Aorta (tissue), 5 donors: ENCODE measurements at regions of chr7 and their contacts with region 1.

Region 1: DNA sequence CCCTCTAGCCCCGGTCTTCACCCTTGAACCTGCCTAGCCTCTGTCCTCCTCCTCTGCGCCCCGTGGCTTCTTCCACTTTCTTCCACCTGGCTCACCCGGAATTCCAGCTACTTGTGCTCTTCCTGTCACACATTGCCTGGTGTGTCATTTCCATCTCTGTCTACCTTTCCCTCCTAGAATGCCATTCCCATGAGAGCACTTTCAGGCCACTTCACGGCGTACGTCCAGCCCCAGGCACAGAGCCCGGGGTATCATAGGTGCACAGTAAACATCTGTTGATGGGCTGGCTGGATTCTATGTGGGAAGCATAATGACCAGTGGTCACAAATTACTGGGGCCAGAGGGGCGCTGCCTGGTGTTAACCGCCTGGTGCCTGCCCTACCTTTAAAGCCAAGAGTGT is 161.3 kb downstream of the CUX1 start:
- DNase-seq: no peak
- ATAC-seq: no peak
- H3K4me3 ChIP-seq: no peak overlapping the region
- H3K27ac ChIP-seq: no peak overlapping the region
- H3K4me1 ChIP-seq: no peaks in the 10 kb centered on the region
- H3K27me3 ChIP-seq: no peaks in the 10 kb centered on the region

Region 2: DNA sequence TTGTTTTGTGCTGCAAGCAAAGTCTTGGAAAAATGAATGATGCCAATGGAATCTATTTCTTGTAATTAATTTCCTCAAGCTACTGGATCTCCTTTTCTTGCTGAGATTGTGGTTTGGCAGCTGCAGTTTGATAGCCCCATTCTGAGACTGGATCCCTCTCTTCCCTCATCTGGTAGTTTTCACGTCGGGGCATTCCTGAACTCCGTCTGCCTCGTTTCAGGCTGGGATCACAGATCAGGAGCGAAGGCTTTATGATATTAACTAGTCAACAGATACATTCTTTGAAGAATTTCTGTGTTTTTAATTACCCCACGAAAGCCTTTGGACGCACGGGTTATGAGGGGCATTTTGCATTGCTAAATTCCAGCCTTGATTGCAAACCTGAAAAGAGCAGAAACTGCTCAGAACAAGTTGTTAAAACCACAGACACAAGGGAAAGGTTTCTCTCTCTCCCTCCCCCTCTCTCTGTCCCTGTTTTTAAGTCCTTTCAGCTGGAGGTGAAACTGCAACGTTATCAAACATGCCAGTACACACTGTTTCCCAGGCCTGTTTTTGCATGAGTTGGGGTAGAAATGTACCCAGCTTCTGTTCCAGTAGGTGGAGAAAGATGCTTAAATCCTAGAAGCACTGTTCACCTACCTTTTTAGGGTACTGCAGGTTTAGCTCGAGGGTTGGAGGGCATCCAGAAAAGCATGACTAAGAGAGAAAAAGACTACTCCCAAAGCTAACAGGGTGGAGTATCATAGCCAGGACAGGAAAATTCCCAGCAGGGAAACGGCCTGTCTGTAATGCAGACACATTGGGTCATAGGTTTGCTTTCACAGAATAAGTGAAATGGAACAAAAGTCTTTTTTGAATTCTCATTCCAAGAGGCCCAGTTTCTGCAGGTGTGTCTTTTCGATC is 37.0 kb before region 1 on chr7:
- intact Hi-C with region 1: no loop called
- DNase-seq: peak in 1 of 2 donors; percentile 37
- ATAC-seq: peak; percentile 70
- H3K4me3 ChIP-seq: no peak overlapping the region
- H3K27ac ChIP-seq: peak overlapping the region in 1 of 2 donors; percentile 70
- H3K4me1 ChIP-seq: peaks cover 2 to 3% of the 10 kb centered on the region in 2 donors
- H3K27me3 ChIP-seq: no peaks in the 10 kb centered on the region

Region 3: GRCh38 chr7:101960985-101961708 is 17.5 kb before region 1 on chr7:
- intact Hi-C with region 1: loop called in 1 of 2 experiments (anchors 1 kb)
- DNase-seq: no peak
- ATAC-seq: peak; percentile 37
- H3K4me3 ChIP-seq: no peak overlapping the region
- H3K27ac ChIP-seq: no peak overlapping the region
- H3K4me1 ChIP-seq: no peaks in the 10 kb centered on the region
- H3K27me3 ChIP-seq: no peaks in the 10 kb centered on the region

Region 4: GRCh38 chr7:102140952-102141370 is 162.3 kb after region 1 on chr7:
- intact Hi-C with region 1: no loop called
- DNase-seq: peak in 1 of 2 donors; percentile 64
- ATAC-seq: no peak
- H3K4me3 ChIP-seq: no peak overlapping the region
- H3K27ac ChIP-seq: no peak overlapping the region
- H3K4me1 ChIP-seq: no peaks in the 10 kb centered on the region
- H3K27me3 ChIP-seq: no peaks in the 10 kb centered on the region